Vagina (tissue), 2 donors: ENCODE measurements at regions of chr4 and their contacts with region 1.

Region 1: DNA sequence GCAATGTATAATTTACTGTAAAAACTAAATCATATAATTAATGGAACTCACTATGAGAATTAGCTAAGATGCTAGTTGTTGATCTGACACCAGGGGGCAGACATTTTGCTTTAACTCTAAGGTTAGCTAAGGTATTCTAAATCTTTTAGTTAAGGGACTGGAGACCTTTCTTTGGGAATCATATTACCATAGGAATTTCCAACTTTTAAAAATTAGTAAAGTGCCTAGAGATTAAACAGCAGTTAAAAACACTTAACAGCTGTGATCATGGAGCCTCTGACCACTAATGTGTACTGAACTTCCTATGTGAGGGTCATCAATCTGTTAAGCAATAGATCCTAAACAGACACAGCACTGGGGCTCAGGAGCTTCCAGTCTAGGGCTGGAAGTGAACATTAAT is 226.6 kb downstream of the NSUN7 start:
- DNase-seq: no peak
- H3K4me3 ChIP-seq: no peak overlapping the region
- H3K27ac ChIP-seq: no peak overlapping the region
- H3K4me1 ChIP-seq: no peaks in the 10 kb centered on the region
- H3K27me3 ChIP-seq: no peaks in the 10 kb centered on the region
- CTCF ChIP-seq: peak; percentile 20 to 75 (median 50)
- POLR2A ChIP-seq: no peak

Region 2: DNA sequence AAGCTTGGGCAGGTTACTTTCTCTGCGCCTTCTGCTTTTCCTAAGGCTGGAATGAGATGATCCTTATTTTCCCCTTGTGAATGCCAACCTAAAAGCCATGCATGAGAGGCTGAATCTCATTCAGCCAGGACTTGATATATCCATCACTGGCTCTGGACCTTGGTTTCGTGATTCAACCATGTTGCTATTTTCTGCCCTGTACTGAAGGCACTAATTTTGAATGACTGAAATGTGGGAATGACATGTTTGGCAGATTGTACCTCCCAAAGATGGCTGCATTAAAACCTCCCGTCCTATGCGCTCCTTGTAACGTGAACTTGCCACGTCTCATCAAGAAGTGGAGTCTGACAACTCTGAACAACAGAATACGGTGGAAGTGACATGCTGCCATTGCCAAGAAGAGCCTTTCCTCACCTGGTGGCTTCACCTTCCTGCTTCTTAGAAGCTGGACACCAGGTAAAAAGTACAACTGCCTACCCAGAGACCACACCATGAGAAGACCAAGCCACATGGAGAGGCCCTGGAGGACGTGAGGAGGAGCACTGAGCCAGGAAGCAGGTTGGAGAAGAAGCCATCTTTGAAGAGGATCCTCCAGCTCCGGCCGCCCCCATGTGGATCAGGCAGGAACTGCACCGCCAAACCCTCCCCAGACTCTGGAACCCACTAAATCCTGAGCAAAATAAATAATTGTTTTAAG is 52.1 kb before region 1 on chr4:
- intact Hi-C with region 1: loop called (anchors 10 kb)
- DNase-seq: no peak
- H3K4me3 ChIP-seq: no peak overlapping the region
- H3K27ac ChIP-seq: no peak overlapping the region
- H3K4me1 ChIP-seq: no peaks in the 10 kb centered on the region
- H3K27me3 ChIP-seq: no peaks in the 10 kb centered on the region
- CTCF ChIP-seq: peak in 2 of 3 experiments; percentile 41 to 62
- POLR2A ChIP-seq: no peak

Region 3: DNA sequence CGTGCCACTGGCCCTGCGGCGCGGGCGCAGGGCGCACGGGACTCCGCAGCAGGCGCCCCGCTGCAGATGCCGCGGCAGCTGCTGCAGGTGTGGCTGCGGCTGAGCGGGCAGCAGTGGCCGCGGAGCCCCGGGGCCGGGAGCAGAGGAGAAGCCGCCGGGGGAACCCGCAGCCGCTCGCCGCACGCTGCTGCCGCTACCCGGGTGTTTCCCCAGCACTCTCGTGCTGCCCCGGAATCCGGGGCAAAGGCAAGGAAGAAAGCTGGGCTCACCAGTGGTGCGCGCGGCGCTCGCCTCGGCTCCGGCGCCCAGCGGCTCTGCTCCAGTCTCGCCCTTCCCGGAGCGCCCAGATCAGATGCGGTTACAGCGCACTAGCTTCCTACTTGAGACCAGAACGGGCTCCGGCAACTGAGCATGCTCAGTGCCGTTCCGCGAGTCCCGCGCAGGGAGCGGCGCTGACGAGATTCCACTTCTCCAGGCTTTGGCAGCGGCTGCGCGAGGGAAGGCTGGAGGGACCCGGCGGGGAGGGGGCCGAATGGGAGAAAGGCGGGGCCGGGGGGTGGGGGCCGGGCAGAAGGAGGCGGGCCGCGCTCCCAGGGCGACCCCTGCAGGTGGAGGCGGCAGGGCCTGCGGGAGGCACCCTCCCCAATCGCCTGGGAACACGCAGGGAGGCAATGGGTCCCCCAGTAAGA is 237.9 kb after region 1 on chr4 and contains the start of gene APBB2:
- intact Hi-C with region 1: loop called (anchors 5 kb)
- DNase-seq: peak in 1 of 2 donors; percentile 95
- H3K4me3 ChIP-seq: peak within 1 kb of the TSS; percentile 91 to 95
- H3K27ac ChIP-seq: peak within 1 kb of the TSS; percentile 92
- H3K4me1 ChIP-seq: peaks cover 33% of the 10 kb centered on the region
- H3K27me3 ChIP-seq: no peaks in the 10 kb centered on the region
- CTCF ChIP-seq: peak in 1 of 3 experiments; percentile 93
- POLR2A ChIP-seq: peak in 1 of 2 donors; percentile 80
- total RNA-seq, gene APBB2: 68.8 TPM